ENCODE measurements at regions of chr11 and their contacts with region 1.

Region 1: GRCh38 chr11:93169950-93170561 is 27.7 kb downstream of the SLC36A4 start:
- DNase-seq: peak in 1 of 9 donors; percentile 1
- ATAC-seq: no peak
- H3K4me3 ChIP-seq: no peak overlapping the region
- H3K4me3 Mint-ChIP-seq: no peak overlapping the region
- H3K27ac ChIP-seq: no peak overlapping the region
- H3K27ac Mint-ChIP-seq: no peak overlapping the region
- H3K4me1 ChIP-seq: no peaks in the 10 kb centered on the region
- H3K4me1 Mint-ChIP-seq: peaks cover 0 to 20% (median 13%) of the 10 kb centered on the region in 7 donors
- H3K27me3 ChIP-seq: no peaks in the 10 kb centered on the region
- H3K27me3 Mint-ChIP-seq: no peaks in the 10 kb centered on the region

Region 2: DNA sequence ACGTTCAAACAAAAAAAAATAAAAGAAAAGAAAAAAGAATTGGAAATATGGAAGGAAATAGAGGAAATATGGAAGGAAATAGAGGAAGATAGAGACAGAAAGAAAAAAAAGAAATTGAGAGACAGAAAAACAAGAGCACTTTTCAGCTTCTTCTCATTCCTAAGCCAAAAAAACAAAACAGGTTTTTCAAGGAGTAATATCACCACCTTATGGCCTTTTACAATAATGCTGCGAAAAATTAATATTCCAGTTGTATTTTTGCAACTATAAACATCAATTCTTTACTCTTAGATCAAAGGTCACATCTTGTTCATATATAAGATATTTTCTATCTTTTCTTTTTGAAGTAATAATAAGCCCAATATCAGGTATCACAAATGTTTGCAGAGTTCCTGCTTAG is 617.1 kb before region 1 on chr11:
- CTCF ChIA-PET with region 1: no interaction called
- POLR2A ChIA-PET with region 1: no interaction called
- intact Hi-C with region 1: no loop called
- DNase-seq: no peak
- ATAC-seq: no peak
- H3K4me3 ChIP-seq: no peak overlapping the region
- H3K4me3 Mint-ChIP-seq: no peak overlapping the region
- H3K27ac ChIP-seq: no peak overlapping the region
- H3K27ac Mint-ChIP-seq: no peak overlapping the region
- H3K4me1 ChIP-seq: no peaks in the 10 kb centered on the region
- H3K4me1 Mint-ChIP-seq: no peaks in the 10 kb centered on the region
- H3K27me3 ChIP-seq: no peaks in the 10 kb centered on the region
- H3K27me3 Mint-ChIP-seq: no peaks in the 10 kb centered on the region

Region 3: GRCh38 chr11:92911478-92911877 is 258.6 kb before region 1 on chr11:
- CTCF ChIA-PET with region 1: no interaction called
- POLR2A ChIA-PET with region 1: no interaction called
- intact Hi-C with region 1: no loop called
- DNase-seq: no peak
- ATAC-seq: no peak
- H3K4me3 ChIP-seq: no peak overlapping the region
- H3K4me3 Mint-ChIP-seq: no peak overlapping the region
- H3K27ac ChIP-seq: no peak overlapping the region
- H3K27ac Mint-ChIP-seq: no peak overlapping the region
- H3K4me1 ChIP-seq: no peaks in the 10 kb centered on the region
- H3K4me1 Mint-ChIP-seq: no peaks in the 10 kb centered on the region
- H3K27me3 ChIP-seq: no peaks in the 10 kb centered on the region
- H3K27me3 Mint-ChIP-seq: peaks cover 0 to 9% (median 0%) of the 10 kb centered on the region in 5 donors

Region 4: DNA sequence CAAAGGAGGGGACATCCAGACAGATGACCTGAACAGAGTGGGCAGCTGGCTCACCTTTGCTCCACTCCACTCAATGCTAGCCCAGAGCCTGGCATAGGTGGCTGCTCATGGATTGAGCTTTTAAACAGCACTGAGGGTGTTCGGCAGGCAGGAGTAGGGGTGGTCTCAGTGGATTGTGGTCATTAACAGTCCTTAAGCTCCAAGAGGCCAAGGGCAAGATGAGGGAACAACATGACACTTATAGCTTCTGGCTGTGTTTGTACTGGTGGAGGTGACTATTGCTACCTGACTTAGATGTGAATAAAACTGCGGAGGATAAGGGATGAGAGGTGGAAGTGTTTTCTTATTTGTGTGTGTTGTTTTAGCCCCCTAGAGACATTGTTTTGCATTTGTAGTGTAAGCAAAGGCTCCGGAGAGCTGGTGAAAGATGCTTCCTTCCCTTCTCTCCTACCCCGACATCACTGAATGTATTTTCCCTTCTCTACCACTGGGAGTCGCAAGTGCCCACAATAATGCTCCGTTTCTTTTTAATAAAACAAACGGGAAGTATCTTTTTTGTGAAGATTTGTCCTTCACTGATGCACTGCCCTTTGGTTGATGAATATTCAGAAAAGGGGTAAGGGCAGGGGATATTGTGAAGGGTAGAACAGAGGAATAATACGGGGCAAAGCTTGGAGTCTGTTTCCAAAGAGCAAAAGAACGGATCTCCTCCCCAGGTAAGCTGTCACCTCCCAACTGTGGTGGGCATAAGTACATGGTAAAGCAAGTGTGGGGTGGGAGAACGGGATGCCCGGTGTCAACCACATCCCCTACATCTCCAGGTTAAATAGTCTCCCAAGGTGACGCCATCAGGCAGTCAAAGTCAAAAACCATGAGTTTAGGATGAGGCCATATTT is 228.1 kb before region 1 on chr11:
- CTCF ChIA-PET with region 1: no interaction called
- POLR2A ChIA-PET with region 1: no interaction called
- intact Hi-C with region 1: loop called in 1 of 2 experiments (anchors 1 kb)
- DNase-seq: peak in 2 of 9 donors; percentile 6 to 9
- ATAC-seq: peak; percentile 53
- H3K4me3 ChIP-seq: no peak overlapping the region
- H3K4me3 Mint-ChIP-seq: no peak overlapping the region
- H3K27ac ChIP-seq: no peak overlapping the region
- H3K27ac Mint-ChIP-seq: no peak overlapping the region
- H3K4me1 ChIP-seq: no peaks in the 10 kb centered on the region
- H3K4me1 Mint-ChIP-seq: no peaks in the 10 kb centered on the region
- H3K27me3 ChIP-seq: no peaks in the 10 kb centered on the region
- H3K27me3 Mint-ChIP-seq: peaks cover 0 to 18% (median 9%) of the 10 kb centered on the region in 5 donors

Region 5: GRCh38 chr11:93089474-93090102 is 80.5 kb before region 1 on chr11:
- CTCF ChIA-PET with region 1: no interaction called
- POLR2A ChIA-PET with region 1: no interaction called
- intact Hi-C with region 1: loop called in 1 of 2 experiments (anchors 1 kb)
- DNase-seq: no peak
- ATAC-seq: no peak
- H3K4me3 ChIP-seq: no peak overlapping the region
- H3K4me3 Mint-ChIP-seq: no peak overlapping the region
- H3K27ac ChIP-seq: no peak overlapping the region
- H3K27ac Mint-ChIP-seq: no peak overlapping the region
- H3K4me1 ChIP-seq: no peaks in the 10 kb centered on the region
- H3K4me1 Mint-ChIP-seq: peaks cover 0 to 3% (median 0%) of the 10 kb centered on the region in 7 donors
- H3K27me3 ChIP-seq: no peaks in the 10 kb centered on the region
- H3K27me3 Mint-ChIP-seq: peaks cover 4 to 21% (median 12%) of the 10 kb centered on the region in 5 donors